ENCODE measurements at regions of chr9 and their contacts with region 1.

Region 1: DNA sequence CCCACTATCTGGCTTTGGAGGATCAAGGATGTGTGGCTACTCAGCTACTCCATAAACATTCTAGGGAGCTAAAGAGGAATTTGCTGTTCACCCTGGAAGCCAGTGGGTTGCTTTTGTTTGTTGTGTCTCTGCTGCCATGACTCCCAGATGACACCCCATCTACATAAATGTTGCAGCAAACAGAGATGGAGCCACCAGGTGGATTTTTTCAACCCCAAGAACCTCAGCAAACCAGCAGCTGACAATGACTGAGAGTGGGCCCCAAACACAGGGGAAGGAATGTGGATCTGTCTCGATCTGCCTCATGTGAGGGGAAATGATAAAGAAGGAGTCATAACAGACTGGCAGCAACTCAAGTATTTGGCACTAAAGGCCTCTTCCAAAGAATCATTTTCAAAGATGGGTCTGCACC is 132.7 kb upstream of the TNC start:
- DNase-seq: peak; percentile 98
- H3K4me3 ChIP-seq: no peak overlapping the region
- H3K27ac ChIP-seq: peak overlapping the region; percentile 92
- H3K4me1 ChIP-seq: peaks cover 21% of the 10 kb centered on the region
- H3K27me3 ChIP-seq: no peaks in the 10 kb centered on the region
- CTCF ChIP-seq: peak; percentile 1 to 16

Region 2: DNA sequence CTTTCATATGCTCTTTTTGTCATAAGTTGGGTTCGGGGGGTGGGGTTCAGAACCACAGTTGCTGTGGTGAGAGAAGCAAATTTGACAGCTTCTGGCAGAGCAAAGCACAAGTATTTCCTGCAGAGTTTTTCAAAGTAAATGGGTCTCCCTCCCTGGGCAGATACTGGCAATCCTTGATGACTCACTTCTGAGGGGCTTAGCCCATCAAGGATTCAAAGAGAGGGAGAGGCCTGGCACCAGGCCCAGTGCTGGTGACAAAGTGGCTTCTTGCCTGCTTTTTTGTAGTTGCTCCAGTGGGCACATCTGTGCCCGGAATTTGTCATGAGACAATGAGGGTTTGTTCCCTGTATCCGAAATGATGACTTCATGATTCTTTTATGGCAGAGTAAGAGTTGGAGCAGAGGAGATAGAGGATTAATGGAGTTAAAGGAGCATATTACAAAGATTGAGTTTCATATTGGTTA is 86.1 kb before region 1 on chr9:
- CTCF ChIA-PET with region 1: no interaction called
- dilution Hi-C with region 1: no loop called
- in situ Hi-C with region 1: no loop called
- intact Hi-C with region 1: no loop called
- DNase-seq: peak; percentile 61
- H3K4me3 ChIP-seq: no peak overlapping the region
- H3K27ac ChIP-seq: peak overlapping the region; percentile 26
- H3K4me1 ChIP-seq: peaks cover 28% of the 10 kb centered on the region
- H3K27me3 ChIP-seq: no peaks in the 10 kb centered on the region
- CTCF ChIP-seq: no peak

Region 3: GRCh38 chr9:115204904-115205453 is 45.6 kb before region 1 on chr9:
- CTCF ChIA-PET with region 1: no interaction called
- dilution Hi-C with region 1: no loop called
- in situ Hi-C with region 1: no loop called
- intact Hi-C with region 1: loop called (anchors 1 kb)
- DNase-seq: peak; percentile 92
- H3K4me3 ChIP-seq: no peak overlapping the region
- H3K27ac ChIP-seq: peak overlapping the region; percentile 63
- H3K4me1 ChIP-seq: peaks cover 65% of the 10 kb centered on the region
- H3K27me3 ChIP-seq: no peaks in the 10 kb centered on the region
- CTCF ChIP-seq: no peak

Region 4: GRCh38 chr9:115373000-115373709 is 122.5 kb after region 1 on chr9:
- CTCF ChIA-PET with region 1: no interaction called
- dilution Hi-C with region 1: no loop called
- in situ Hi-C with region 1: no loop called
- intact Hi-C with region 1: loop called (anchors 1 kb)
- DNase-seq: peak; percentile 97
- H3K4me3 ChIP-seq: peak overlapping the region in 1 of 3 experiments; percentile 8
- H3K27ac ChIP-seq: peak overlapping the region; percentile 90
- H3K4me1 ChIP-seq: peaks cover 36% of the 10 kb centered on the region
- H3K27me3 ChIP-seq: no peaks in the 10 kb centered on the region
- CTCF ChIP-seq: peak in 1 of 2 donors; percentile 29

Measured in mammary epithelial cell (primary cell).